ENCODE measurements at regions of chr17 and their contacts with region 1.

Region 1: GRCh38 chr17:29389982-29390850 is at the start of gene TAOK1:
- DNase-seq: peak; percentile 99
- ATAC-seq: peak; percentile 95 to 96
- H3K4me3 ChIP-seq: peak within 1 kb of the TSS; percentile 89 to 98 (median 97)
- H3K27ac ChIP-seq: peak within 1 kb of the TSS; percentile 89 to 100 (median 100)
- H3K4me1 ChIP-seq: peaks cover 36 to 49% of the 10 kb centered on the region in 2 donors
- H3K27me3 ChIP-seq: no peaks in the 10 kb centered on the region
- CTCF ChIP-seq: peak in 1 of 5 experiments; percentile 16
- POLR2A ChIP-seq: peak; percentile 96
- total RNA-seq, gene TAOK1: 30.1 to 48.4 (median 35.7) TPM

Region 2: DNA sequence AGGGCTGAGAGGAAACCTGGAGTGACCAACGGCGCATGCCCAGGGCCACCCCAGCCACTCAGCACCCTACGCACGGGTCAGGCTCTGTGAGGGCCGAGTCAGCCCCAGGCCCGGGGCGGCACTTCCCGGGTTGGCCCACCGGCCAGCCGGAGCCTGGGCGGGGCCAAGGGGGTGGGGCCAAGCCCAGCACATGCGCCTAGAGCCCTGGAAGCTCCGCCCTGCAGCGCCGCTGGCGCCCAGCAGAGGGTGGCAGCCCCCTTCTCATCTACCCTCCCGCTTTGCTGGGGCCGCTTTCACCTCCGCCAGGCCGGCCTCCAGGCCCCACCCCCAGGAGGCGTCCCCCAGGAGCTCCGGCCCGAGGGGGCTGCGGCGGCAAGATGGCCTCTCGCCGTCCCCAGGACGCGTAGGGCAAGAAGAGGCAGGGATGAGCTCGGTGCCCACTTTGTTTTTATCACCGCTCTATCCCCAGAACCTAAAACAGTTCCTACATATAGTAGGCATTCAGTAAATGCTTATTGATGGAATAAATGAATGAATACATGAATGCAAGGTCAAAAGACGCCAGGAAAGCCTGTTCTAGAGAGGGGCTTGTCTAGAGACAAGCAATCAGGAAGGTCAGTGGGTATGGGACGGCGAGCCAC is 241.3 kb before region 1 on chr17:
- in situ Hi-C with region 1: no loop called
- intact Hi-C with region 1: loop called (anchors 10 kb)
- DNase-seq: peak; percentile 89 to 95
- ATAC-seq: peak; percentile 77 to 85
- H3K4me3 ChIP-seq: peak overlapping the region; percentile 61 to 80 (median 66)
- H3K27ac ChIP-seq: peak overlapping the region; percentile 82 to 98 (median 84)
- H3K4me1 ChIP-seq: peaks cover 27 to 38% of the 10 kb centered on the region in 2 donors
- H3K27me3 ChIP-seq: no peaks in the 10 kb centered on the region
- CTCF ChIP-seq: peak; percentile 97 to 100 (median 98)
- POLR2A ChIP-seq: peak; percentile 42 to 51

Region 3: GRCh38 chr17:29568331-29569244 is 178.4 kb after region 1 on chr17 and contains the start of gene TP53I13:
- in situ Hi-C with region 1: no loop called
- intact Hi-C with region 1: loop called (anchors 1 kb)
- DNase-seq: peak; percentile 62 to 76
- ATAC-seq: peak; percentile 61 to 69
- H3K4me3 ChIP-seq: peak within 1 kb of the TSS; percentile 66 to 82 (median 79)
- H3K27ac ChIP-seq: peak within 1 kb of the TSS; percentile 85 to 93 (median 86)
- H3K4me1 ChIP-seq: peaks cover 17 to 28% of the 10 kb centered on the region in 2 donors
- H3K27me3 ChIP-seq: peaks cover 0 to 5% (median 0%) of the 10 kb centered on the region in 3 donors
- CTCF ChIP-seq: no peak
- POLR2A ChIP-seq: peak; percentile 66 to 86
- total RNA-seq, gene TP53I13: 31.0 to 50.2 (median 32.1) TPM

Region 4: DNA sequence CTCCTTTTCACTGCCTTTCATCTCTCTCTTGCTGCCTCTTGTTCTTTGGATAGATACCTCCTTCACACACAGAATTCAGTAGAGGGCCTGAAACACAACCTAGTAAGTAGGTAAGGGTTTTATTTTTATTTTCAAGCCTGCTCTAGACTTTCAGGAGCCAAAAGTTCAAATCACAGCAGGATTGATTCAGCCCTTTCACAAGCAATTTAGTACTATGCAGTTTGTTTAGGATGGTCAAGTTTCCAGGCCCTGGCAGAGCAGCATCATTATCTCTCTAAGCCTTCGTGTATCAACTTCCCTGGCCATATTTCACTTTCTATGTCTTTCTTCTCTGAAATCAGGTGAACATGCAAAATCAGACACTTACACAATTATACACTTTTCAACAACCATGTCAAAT is 381.3 kb after region 1 on chr17:
- in situ Hi-C with region 1: loop called in 1 of 4 experiments (anchors 25 kb)
- intact Hi-C with region 1: loop called (anchors 10 kb)
- DNase-seq: no peak
- ATAC-seq: no peak
- H3K4me3 ChIP-seq: no peak overlapping the region
- H3K27ac ChIP-seq: peak overlapping the region; percentile 70 to 84 (median 79)
- H3K4me1 ChIP-seq: peaks cover 14 to 21% of the 10 kb centered on the region in 2 donors
- H3K27me3 ChIP-seq: no peaks in the 10 kb centered on the region
- CTCF ChIP-seq: no peak
- POLR2A ChIP-seq: no peak

Region 5: GRCh38 chr17:29789196-29790170 is 399.3 kb after region 1 on chr17:
- in situ Hi-C with region 1: loop called in 1 of 4 experiments (anchors 25 kb)
- intact Hi-C with region 1: no loop called
- DNase-seq: no peak
- ATAC-seq: peak in 1 of 2 donors; percentile 34
- H3K4me3 ChIP-seq: no peak overlapping the region
- H3K27ac ChIP-seq: no peak overlapping the region
- H3K4me1 ChIP-seq: peaks cover 0 to 13% of the 10 kb centered on the region in 2 donors
- H3K27me3 ChIP-seq: no peaks in the 10 kb centered on the region
- CTCF ChIP-seq: no peak
- POLR2A ChIP-seq: no peak

Region 6: GRCh38 chr17:30116661-30117551 is 726.7 kb after region 1 on chr17 and contains the start of gene NSRP1:
- in situ Hi-C with region 1: no loop called
- intact Hi-C with region 1: loop called (anchors 10 kb)
- DNase-seq: peak; percentile 89 to 92
- ATAC-seq: peak; percentile 97 to 99
- H3K4me3 ChIP-seq: peak within 1 kb of the TSS; percentile 65 to 91 (median 84)
- H3K27ac ChIP-seq: peak within 1 kb of the TSS; percentile 87 to 98 (median 96)
- H3K4me1 ChIP-seq: peaks cover 18 to 24% of the 10 kb centered on the region in 2 donors
- H3K27me3 ChIP-seq: no peaks in the 10 kb centered on the region
- CTCF ChIP-seq: no peak
- POLR2A ChIP-seq: peak; percentile 88 to 89
- total RNA-seq, gene NSRP1: 7.4 to 13.3 (median 11.0) TPM

Measured in gastrocnemius medialis (tissue), 4 donors.